ENCODE measurements at regions of chr9 and their contacts with region 1.

Region 1: GRCh38 chr9:8673830-8674229 is 874.3 kb upstream of the DMAC1 start:
- DNase-seq: no peak
- H3K4me3 ChIP-seq: no peak overlapping the region
- H3K27ac ChIP-seq: no peak overlapping the region
- H3K4me1 ChIP-seq: no peaks in the 10 kb centered on the region
- H3K27me3 ChIP-seq: no peaks in the 10 kb centered on the region

Region 2: DNA sequence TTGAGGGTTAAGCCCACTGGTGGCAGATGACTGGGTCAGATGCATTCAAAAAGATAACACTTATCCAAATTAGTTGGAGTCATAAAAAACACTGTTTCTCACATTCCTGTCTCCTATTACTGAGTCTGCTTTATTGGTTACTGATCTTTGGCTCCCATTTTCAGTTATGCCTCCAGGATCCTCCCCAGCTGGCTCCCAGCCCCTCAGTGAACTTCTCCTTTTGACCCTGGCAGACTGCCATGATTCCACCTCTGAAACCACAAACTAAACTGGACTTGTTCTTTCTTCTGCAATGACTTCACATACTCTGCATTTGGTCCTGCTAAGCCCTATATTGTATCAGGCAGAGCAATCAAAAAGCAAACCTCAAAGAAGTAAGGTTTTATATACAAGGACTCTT is 13.4 kb before region 1 on chr9:
- CTCF ChIA-PET with region 1: interaction called, 12 read pairs
- POLR2A ChIA-PET with region 1: no interaction called
- DNase-seq: peak; percentile 90 to 97 (median 96)
- H3K4me3 ChIP-seq: peak overlapping the region in 4 of 7 experiments; percentile 14 to 58 (median 37)
- H3K27ac ChIP-seq: no peak overlapping the region
- H3K4me1 ChIP-seq: peaks cover 6 to 26% (median 15%) of the 10 kb centered on the region in 4 experiments
- H3K27me3 ChIP-seq: no peaks in the 10 kb centered on the region

Region 3: DNA sequence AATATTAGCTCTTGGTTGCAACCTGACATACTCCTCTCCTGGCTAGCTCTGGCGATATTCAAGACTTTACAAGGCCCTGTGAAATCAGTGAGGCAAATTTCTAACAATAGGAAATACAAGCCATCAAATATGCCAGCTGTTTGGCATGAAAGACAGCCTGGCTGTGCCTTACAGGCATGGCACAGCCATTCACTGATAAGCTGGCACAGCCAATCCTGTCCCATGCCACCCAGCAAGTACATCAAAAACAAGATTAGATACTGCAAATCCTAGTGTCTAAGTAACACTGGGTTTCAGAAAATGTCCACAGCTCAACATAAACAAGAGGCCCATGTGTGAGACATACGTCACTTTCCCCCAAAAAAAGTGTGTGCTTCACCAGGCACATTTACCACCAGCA is 171.5 kb after region 1 on chr9:
- CTCF ChIA-PET with region 1: no interaction called
- POLR2A ChIA-PET with region 1: no interaction called
- DNase-seq: no peak
- H3K4me3 ChIP-seq: no peak overlapping the region
- H3K27ac ChIP-seq: no peak overlapping the region
- H3K4me1 ChIP-seq: no peaks in the 10 kb centered on the region
- H3K27me3 ChIP-seq: no peaks in the 10 kb centered on the region

Measured in common myeloid progenitor, CD34-positive (primary cell).